ENCODE measurements at regions of chr9 and their contacts with region 1.

Region 1: GRCh38 chr9:15606643-15607472 is 54.0 kb downstream of the CCDC171 start:
- DNase-seq: no peak
- H3K4me3 ChIP-seq: no peak overlapping the region
- H3K27ac ChIP-seq: no peak overlapping the region
- H3K4me1 ChIP-seq: no peaks in the 10 kb centered on the region
- H3K27me3 ChIP-seq: no peaks in the 10 kb centered on the region
- CTCF ChIP-seq: peak; percentile 71

Region 2: GRCh38 chr9:15058236-15058635 is 548.6 kb before region 1 on chr9:
- CTCF ChIA-PET with region 1: no interaction called
- POLR2A ChIA-PET with region 1: no interaction called
- intact Hi-C with region 1: no loop called
- DNase-seq: no peak
- H3K4me3 ChIP-seq: no peak overlapping the region
- H3K27ac ChIP-seq: no peak overlapping the region
- H3K4me1 ChIP-seq: no peaks in the 10 kb centered on the region
- H3K27me3 ChIP-seq: no peaks in the 10 kb centered on the region
- CTCF ChIP-seq: no peak

Region 3: GRCh38 chr9:15211160-15211814 is 395.6 kb before region 1 on chr9:
- CTCF ChIA-PET with region 1: no interaction called
- POLR2A ChIA-PET with region 1: no interaction called
- intact Hi-C with region 1: loop called (anchors 5 kb)
- DNase-seq: peak; percentile 28 to 35
- H3K4me3 ChIP-seq: no peak overlapping the region
- H3K27ac ChIP-seq: no peak overlapping the region
- H3K4me1 ChIP-seq: no peaks in the 10 kb centered on the region
- H3K27me3 ChIP-seq: no peaks in the 10 kb centered on the region
- CTCF ChIP-seq: peak; percentile 79

Region 4: GRCh38 chr9:15485836-15486666 is 120.8 kb before region 1 on chr9:
- CTCF ChIA-PET with region 1: interaction called, 4 read pairs
- POLR2A ChIA-PET with region 1: no interaction called
- intact Hi-C with region 1: loop called (anchors 5 kb)
- DNase-seq: no peak
- H3K4me3 ChIP-seq: no peak overlapping the region
- H3K27ac ChIP-seq: no peak overlapping the region
- H3K4me1 ChIP-seq: no peaks in the 10 kb centered on the region
- H3K27me3 ChIP-seq: no peaks in the 10 kb centered on the region
- CTCF ChIP-seq: peak; percentile 53; the same call in 1 of the 2 replicates

Region 5: GRCh38 chr9:16171911-16172310 is 565.1 kb after region 1 on chr9:
- CTCF ChIA-PET with region 1: no interaction called
- POLR2A ChIA-PET with region 1: no interaction called
- intact Hi-C with region 1: no loop called
- DNase-seq: no peak
- H3K4me3 ChIP-seq: no peak overlapping the region
- H3K27ac ChIP-seq: no peak overlapping the region
- H3K4me1 ChIP-seq: no peaks in the 10 kb centered on the region
- H3K27me3 ChIP-seq: no peaks in the 10 kb centered on the region
- CTCF ChIP-seq: no peak

Measured in PC-9 (cell line).